ENCODE measurements at regions of chr20 and their contacts with region 1.

Region 1: DNA sequence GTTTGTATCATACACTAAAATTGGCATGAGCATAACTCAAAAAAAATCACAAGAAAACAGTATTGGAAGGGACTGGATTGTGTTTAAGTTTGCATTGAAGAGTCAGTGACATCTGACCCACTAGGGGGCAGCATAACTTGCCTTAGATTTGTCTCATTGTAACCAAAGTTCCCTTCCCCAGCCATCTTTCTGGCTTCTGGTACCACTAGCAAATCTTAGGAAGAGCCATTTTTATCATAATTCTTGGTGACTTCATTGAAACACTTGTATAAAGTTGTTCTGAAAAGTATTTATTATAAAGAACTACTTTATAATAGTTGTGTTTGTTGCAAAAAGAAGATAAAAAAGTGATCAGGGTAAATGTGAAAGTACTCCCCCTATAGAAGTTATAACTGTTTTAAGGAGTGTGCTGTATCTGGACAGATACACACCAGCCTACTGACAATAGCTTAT is 7.7 kb downstream of the CSTF1 start:
- DNase-seq: peak in 2 of 4 donors; percentile 70 to 82
- ATAC-seq: peak; percentile 82
- H3K4me3 ChIP-seq: no peak overlapping the region
- H3K27ac ChIP-seq: peak overlapping the region in 1 of 2 donors; percentile 33
- H3K4me1 ChIP-seq: peaks cover 0 to 13% of the 10 kb centered on the region in 2 donors
- H3K27me3 ChIP-seq: no peaks in the 10 kb centered on the region
- CTCF ChIP-seq: peak; percentile 73 to 80

Region 2: GRCh38 chr20:56468316-56469082 is 68.4 kb after region 1 on chr20 and contains the start of gene RTF2:
- intact Hi-C with region 1: loop called in 1 of 2 experiments (anchors 10 kb)
- DNase-seq: peak; percentile 92 to 97 (median 96)
- ATAC-seq: peak; percentile 100
- H3K4me3 ChIP-seq: peak within 1 kb of the TSS; percentile 58 to 71
- H3K27ac ChIP-seq: peak within 1 kb of the TSS; percentile 67 to 91
- H3K4me1 ChIP-seq: peaks cover 4 to 62% of the 10 kb centered on the region in 2 donors
- H3K27me3 ChIP-seq: no peaks in the 10 kb centered on the region
- CTCF ChIP-seq: no peak
- polyA plus RNA-seq, gene RTF2: 116 to 133 (median 128) TPM

Region 3: GRCh38 chr20:56653221-56653620 is 253.1 kb after region 1 on chr20:
- intact Hi-C with region 1: no loop called
- DNase-seq: no peak
- ATAC-seq: no peak
- H3K4me3 ChIP-seq: no peak overlapping the region
- H3K27ac ChIP-seq: no peak overlapping the region
- H3K4me1 ChIP-seq: no peaks in the 10 kb centered on the region
- H3K27me3 ChIP-seq: peaks cover 0 to 3% of the 10 kb centered on the region in 2 donors
- CTCF ChIP-seq: no peak

Measured in left lung (tissue), 14 donors.